GM12878 (cell line): ENCODE measurements at regions of chr1 and their contacts with region 1.

Region 1: DNA sequence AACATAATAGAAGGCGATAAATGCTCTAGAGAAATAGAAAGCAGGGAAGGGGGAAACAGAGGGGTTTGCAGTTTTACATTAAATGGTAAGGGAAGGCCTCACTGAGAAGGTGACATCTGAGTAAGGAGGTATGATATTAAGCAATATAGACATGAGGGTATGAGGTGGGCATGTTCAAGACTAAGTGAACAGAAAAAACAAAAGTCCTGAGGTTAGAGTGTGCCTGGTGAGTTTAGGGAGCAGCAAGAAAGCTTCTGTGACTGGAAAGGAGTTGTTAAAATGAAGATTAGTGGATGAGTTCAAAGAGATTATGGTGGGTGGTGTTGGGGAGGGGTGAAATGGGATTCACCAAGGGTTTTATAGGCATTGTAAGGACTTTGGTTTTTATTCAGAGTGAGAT is 8.6 kb downstream of the RPRD2 start:
- DNase-seq: no peak
- ATAC-seq: peak; percentile 11; the same call in 2 of the 3 replicates
- H3K4me3 ChIP-seq: no peak overlapping the region
- H3K27ac ChIP-seq: no peak overlapping the region
- H3K4me1 ChIP-seq: no peaks in the 10 kb centered on the region; the same call in 1 of the 2 replicates
- H3K27me3 ChIP-seq: no peaks in the 10 kb centered on the region
- CTCF ChIP-seq: no peak
- EP300 ChIP-seq: no peak
- POLR2A ChIP-seq: no peak
- RAD21 ChIP-seq: no peak

Region 2: GRCh38 chr1:150387200-150387599 is 14.6 kb after region 1 on chr1:
- CTCF ChIA-PET with region 1: interaction called, 4 read pairs
- POLR2A ChIA-PET with region 1: interaction called, 5 read pairs
- RAD21 ChIA-PET with region 1: interaction called, 3 read pairs
- SMC1A ChIA-PET with region 1: interaction called, 12 read pairs
- in situ Hi-C with region 1: no loop called
- intact Hi-C with region 1: no loop called
- DNase-seq: no peak
- ATAC-seq: peak; percentile 60
- H3K4me3 ChIP-seq: no peak overlapping the region
- H3K27ac ChIP-seq: no peak overlapping the region
- H3K4me1 ChIP-seq: peaks cover 10% of the 10 kb centered on the region
- H3K27me3 ChIP-seq: no peaks in the 10 kb centered on the region
- CTCF ChIP-seq: no peak
- EP300 ChIP-seq: no peak
- POLR2A ChIP-seq: no peak
- RAD21 ChIP-seq: no peak

Region 3: DNA sequence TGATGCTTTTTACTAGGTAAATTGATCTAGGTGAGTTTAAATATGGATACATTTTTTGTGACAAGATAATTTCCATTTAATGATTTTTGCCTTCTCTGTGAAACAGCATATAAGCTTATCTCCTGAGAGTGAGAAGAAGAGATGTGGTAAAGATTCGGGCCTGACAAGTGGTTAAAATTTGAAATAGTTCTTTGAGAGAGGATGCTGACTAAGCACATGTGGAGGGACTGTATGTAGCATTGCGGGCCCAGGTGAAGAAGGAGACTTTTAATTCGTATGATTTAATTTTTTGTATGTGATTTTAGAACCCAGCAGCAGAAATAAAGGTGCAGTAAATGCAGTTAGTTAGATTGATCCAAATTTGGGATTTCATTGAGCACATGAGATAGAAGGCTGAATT is 43.2 kb after region 1 on chr1:
- CTCF ChIA-PET with region 1: no interaction called
- POLR2A ChIA-PET with region 1: no interaction called
- RAD21 ChIA-PET with region 1: no interaction called
- SMC1A ChIA-PET with region 1: no interaction called
- in situ Hi-C with region 1: no loop called
- intact Hi-C with region 1: loop called (anchors 5 kb)
- DNase-seq: no peak
- ATAC-seq: no peak
- H3K4me3 ChIP-seq: no peak overlapping the region
- H3K27ac ChIP-seq: no peak overlapping the region
- H3K4me1 ChIP-seq: peaks cover 4% of the 10 kb centered on the region; the same call in 1 of the 2 replicates
- H3K27me3 ChIP-seq: no peaks in the 10 kb centered on the region
- CTCF ChIP-seq: no peak
- EP300 ChIP-seq: no peak
- POLR2A ChIP-seq: no peak
- RAD21 ChIP-seq: no peak